CD8-positive, alpha-beta T cell (primary cell): ENCODE measurements at regions of chr9 and their contacts with region 1.

Region 1: DNA sequence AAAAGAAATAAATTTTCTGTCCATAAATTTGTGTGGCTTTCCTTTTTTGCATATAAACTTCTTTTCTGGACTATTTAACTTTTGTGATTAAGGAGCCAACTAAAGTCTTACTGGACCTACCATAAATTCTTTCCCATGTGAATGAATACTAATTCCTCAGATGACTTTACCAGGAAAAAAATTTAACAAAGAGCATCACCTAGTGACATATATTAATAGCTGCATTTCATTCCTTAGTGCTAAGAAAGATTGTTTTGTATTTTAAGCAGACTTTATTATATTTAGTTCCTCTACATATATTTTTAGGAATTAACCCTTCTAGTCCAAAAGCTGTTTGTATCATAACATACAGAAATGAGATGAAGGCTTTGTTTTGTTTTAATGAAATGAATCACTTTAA is 64.4 kb downstream of the C9orf85 start:
- DNase-seq: no peak
- ATAC-seq: no peak
- H3K4me3 ChIP-seq: no peak overlapping the region
- H3K4me3 Mint-ChIP-seq: no peak overlapping the region
- H3K27ac ChIP-seq: no peak overlapping the region
- H3K27ac Mint-ChIP-seq: no peak overlapping the region
- H3K4me1 ChIP-seq: no peaks in the 10 kb centered on the region
- H3K4me1 Mint-ChIP-seq: no peaks in the 10 kb centered on the region
- H3K27me3 ChIP-seq: no peaks in the 10 kb centered on the region
- H3K27me3 Mint-ChIP-seq: no peaks in the 10 kb centered on the region
- CTCF ChIP-seq: no peak

Region 2: GRCh38 chr9:71806901-71807307 is 168.9 kb before region 1 on chr9:
- CTCF ChIA-PET with region 1: interaction called, 4 read pairs
- POLR2A ChIA-PET with region 1: no interaction called
- intact Hi-C with region 1: loop called in 1 of 2 experiments (anchors 1 kb)
- DNase-seq: peak; percentile 12 to 80 (median 62)
- ATAC-seq: peak; percentile 96
- H3K4me3 ChIP-seq: no peak overlapping the region
- H3K4me3 Mint-ChIP-seq: no peak overlapping the region
- H3K27ac ChIP-seq: no peak overlapping the region
- H3K27ac Mint-ChIP-seq: peak overlapping the region; percentile 27
- H3K4me1 ChIP-seq: peaks cover 6% of the 10 kb centered on the region
- H3K4me1 Mint-ChIP-seq: peaks cover 15% of the 10 kb centered on the region
- H3K27me3 ChIP-seq: no peaks in the 10 kb centered on the region
- H3K27me3 Mint-ChIP-seq: no peaks in the 10 kb centered on the region
- CTCF ChIP-seq: peak; percentile 91